ENCODE measurements at regions of chr1 and their contacts with region 1.

Region 1: DNA sequence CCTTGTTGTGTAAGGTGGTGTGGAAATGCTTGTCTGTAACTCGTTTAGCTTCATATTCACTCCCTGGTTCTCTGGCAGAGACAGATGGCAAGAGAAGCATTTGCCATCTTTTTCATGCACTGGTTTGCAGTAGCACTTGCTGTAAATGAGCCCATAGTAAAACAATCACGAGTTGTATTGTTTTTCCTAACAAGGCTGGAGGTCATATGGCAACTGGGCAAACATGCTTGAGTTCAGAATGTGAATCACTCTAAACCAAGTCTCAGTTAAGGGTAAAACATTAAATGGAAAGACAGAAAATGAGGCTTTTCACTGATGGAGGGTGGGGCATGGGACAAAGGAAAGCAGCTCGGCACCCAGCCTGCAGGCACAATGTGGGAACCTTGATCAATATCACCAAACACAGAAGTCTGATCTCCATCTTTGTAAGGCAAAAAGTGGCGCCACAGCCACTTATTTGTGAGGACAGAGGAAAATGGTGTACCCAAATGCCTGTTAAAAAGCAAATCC is 26.5 kb upstream of the LPAR3 start:
- DNase-seq: no peak
- CTCF ChIP-seq: no peak

Region 2: GRCh38 chr1:84936116-84936810 is 16.7 kb after region 1 on chr1:
- CTCF ChIA-PET with region 1: interaction called, 29 read pairs
- POLR2A ChIA-PET with region 1: no interaction called
- DNase-seq: peak; percentile 35
- CTCF ChIP-seq: peak; percentile 88